ENCODE measurements at regions of chr2 and their contacts with region 1.

Region 1: GRCh38 chr2:229955663-229956062 is 33.4 kb downstream of the FBXO36 start:
- DNase-seq: no peak
- ATAC-seq: no peak
- H3K4me3 ChIP-seq: no peak overlapping the region
- H3K4me3 Mint-ChIP-seq: no peak overlapping the region
- H3K27ac ChIP-seq: no peak overlapping the region
- H3K27ac Mint-ChIP-seq: no peak overlapping the region
- H3K4me1 ChIP-seq: no peaks in the 10 kb centered on the region
- H3K4me1 Mint-ChIP-seq: no peaks in the 10 kb centered on the region
- H3K27me3 ChIP-seq: no peaks in the 10 kb centered on the region
- H3K27me3 Mint-ChIP-seq: no peaks in the 10 kb centered on the region
- CTCF ChIP-seq: no peak

Region 2: DNA sequence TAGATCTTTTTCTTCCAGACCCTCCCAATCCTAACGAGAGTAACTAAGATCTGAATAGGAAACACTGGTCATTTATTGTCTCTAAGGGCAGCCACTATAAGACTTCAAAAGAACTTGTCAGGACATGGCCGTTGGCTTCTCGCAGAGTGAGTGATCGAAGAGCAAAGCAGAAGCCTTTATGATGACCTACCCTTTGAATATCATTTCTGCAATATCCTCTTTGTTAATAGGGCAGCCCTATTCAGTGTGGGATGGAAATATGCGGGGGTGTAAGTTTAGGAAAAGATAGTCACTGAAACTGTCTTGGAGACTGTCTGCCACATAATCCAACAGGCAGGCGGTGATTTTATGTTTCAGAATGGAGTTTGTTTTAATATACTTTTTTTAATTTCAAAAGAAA is 37.6 kb after region 1 on chr2:
- CTCF ChIA-PET with region 1: no interaction called
- POLR2A ChIA-PET with region 1: no interaction called
- intact Hi-C with region 1: loop called (anchors 1 kb)
- DNase-seq: no peak
- ATAC-seq: no peak
- H3K4me3 ChIP-seq: no peak overlapping the region
- H3K4me3 Mint-ChIP-seq: no peak overlapping the region
- H3K27ac ChIP-seq: no peak overlapping the region
- H3K27ac Mint-ChIP-seq: no peak overlapping the region
- H3K4me1 ChIP-seq: no peaks in the 10 kb centered on the region
- H3K4me1 Mint-ChIP-seq: no peaks in the 10 kb centered on the region
- H3K27me3 ChIP-seq: no peaks in the 10 kb centered on the region
- H3K27me3 Mint-ChIP-seq: no peaks in the 10 kb centered on the region
- CTCF ChIP-seq: no peak

Measured in B cell (primary cell).